ENCODE measurements at regions of chr11 and their contacts with region 1.

Region 1: GRCh38 chr11:60786811-60787567 is 1.9 kb downstream of the MS4A10 start:
- DNase-seq: peak; percentile 96
- H3K4me3 ChIP-seq: no peak overlapping the region
- H3K27ac ChIP-seq: peak overlapping the region; percentile 78
- H3K4me1 ChIP-seq: peaks cover 28% of the 10 kb centered on the region
- H3K27me3 ChIP-seq: no peaks in the 10 kb centered on the region
- CTCF ChIP-seq: no peak
- POLR2A ChIP-seq: no peak

Region 2: GRCh38 chr11:60756307-60757032 is 30.5 kb before region 1 on chr11 and contains the start of gene MS4A15:
- CTCF ChIA-PET with region 1: no interaction called
- POLR2A ChIA-PET with region 1: no interaction called
- dilution Hi-C with region 1: no loop called
- intact Hi-C with region 1: no loop called
- DNase-seq: peak; percentile 28
- H3K4me3 ChIP-seq: no peak within 1 kb of the TSS
- H3K27ac ChIP-seq: no peak within 1 kb of the TSS
- H3K4me1 ChIP-seq: no peaks in the 10 kb centered on the region
- H3K27me3 ChIP-seq: peaks cover 0 to 13% of the 10 kb centered on the region in 2 experiments
- CTCF ChIP-seq: peak; percentile 29 to 43
- POLR2A ChIP-seq: no peak
- total RNA-seq, gene MS4A15: not detected in 2 replicates

Region 3: DNA sequence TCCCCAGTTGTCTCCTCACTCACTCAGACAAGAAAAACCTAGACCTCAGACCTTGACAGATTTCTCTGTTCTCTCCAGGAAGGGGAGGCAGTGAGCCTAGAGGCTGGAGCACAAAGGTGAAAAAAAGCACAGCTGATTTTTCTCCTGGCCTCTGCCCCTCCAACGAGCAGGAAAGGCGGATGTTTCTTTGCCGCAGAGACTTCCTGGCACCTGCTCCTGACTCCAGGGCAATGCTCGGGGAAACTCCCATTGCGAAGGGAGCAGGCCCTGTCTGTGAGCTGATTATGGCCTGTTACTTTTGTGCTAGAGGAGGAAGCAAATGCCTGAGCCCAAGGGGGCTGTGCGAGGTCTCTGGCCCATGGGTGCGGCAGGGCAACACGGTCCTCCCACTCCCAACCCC is 23.6 kb after region 1 on chr11:
- CTCF ChIA-PET with region 1: interaction called, 3 read pairs
- POLR2A ChIA-PET with region 1: interaction called, 4 read pairs
- dilution Hi-C with region 1: no loop called
- intact Hi-C with region 1: loop called (anchors 1 kb)
- DNase-seq: peak; percentile 82
- H3K4me3 ChIP-seq: no peak overlapping the region
- H3K27ac ChIP-seq: peak overlapping the region; percentile 44
- H3K4me1 ChIP-seq: peaks cover 12% of the 10 kb centered on the region
- H3K27me3 ChIP-seq: no peaks in the 10 kb centered on the region
- CTCF ChIP-seq: no peak
- POLR2A ChIP-seq: no peak

Measured in endothelial cell of umbilical vein (primary cell).